Left cardiac atrium (tissue), 4 donors: ENCODE measurements at regions of chr3 and their contacts with region 1.

Region 1: DNA sequence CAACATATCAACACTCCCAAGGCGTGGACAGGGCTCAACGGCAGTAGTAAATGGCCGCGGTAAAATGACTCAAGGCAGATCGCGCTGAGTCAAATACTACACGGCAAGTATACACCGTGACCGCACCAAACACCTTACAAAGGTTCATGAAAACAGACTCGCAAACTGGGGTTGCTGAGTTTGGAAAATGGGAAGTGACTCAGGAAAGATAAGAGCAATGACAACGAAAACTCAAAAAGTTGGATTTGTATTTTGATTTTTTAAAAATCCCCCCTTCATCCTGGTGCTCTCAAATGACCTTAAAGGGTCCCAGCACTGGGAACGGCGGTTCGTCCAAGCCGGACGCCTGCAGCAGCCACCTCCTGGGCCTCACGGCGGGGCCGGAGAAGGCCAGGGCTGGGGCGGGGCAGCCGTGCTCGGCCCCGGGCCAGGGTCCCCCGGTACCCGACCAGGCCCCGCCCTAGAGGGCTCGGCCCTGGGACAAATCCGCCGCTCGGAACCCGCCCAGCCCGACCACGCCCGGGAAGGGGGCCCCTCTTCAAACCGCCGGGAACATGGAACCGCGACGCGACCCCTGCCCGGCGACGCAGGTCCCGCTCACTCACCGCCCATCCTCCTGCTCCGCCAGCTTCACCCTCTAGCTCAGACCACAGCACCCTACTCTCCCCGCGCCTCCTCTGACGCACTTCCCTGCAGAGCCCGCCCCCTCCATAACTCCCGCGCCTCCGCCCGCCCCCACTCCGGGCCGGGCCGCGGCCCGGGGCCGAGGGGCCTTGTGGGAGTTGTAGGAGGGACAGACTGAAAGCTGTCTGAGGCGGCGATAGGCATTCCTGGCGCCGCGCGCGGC is at the start of gene CLDND1:
- DNase-seq: peak; percentile 98
- ATAC-seq: peak; percentile 99 to 100
- total RNA-seq, gene CLDND1: 73.3 to 88.5 TPM

Region 2: DNA sequence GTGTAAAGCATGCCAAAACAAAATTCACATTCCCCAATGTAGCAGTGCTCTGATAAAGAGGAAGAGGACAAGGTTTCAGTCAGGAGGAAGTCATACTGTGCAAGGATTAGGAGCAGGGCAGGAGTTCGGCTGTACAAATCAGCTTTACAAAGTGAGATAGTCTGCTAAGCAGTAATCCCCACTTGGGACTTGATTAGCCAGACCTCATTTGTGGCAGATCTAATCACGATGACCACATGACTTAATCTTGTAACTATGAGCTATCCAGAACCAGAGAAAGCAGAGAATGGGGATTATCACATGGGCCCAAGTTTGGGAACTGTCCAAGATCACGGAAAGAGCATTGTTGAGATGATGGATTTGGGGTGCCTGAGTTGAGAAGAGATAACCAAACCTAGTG is 371.3 kb after region 1 on chr3:
- intact Hi-C with region 1: loop called in 1 of 2 experiments (anchors 10 kb)
- DNase-seq: no peak
- ATAC-seq: peak; percentile 24 to 78